ENCODE measurements at regions of chr16 and their contacts with region 1.

Region 1: GRCh38 chr16:21646721-21647561 is 5.5 kb downstream of the IGSF6 start:
- DNase-seq: peak; percentile 91
- H3K4me3 ChIP-seq: peak overlapping the region; percentile 58
- H3K27ac ChIP-seq: peak overlapping the region; percentile 95
- H3K4me1 ChIP-seq: peaks cover 87% of the 10 kb centered on the region
- CTCF ChIP-seq: no peak

Region 2: GRCh38 chr16:21584817-21585216 is 62.1 kb before region 1 on chr16:
- CTCF ChIA-PET with region 1: no interaction called
- POLR2A ChIA-PET with region 1: interaction called, 4 read pairs
- intact Hi-C with region 1: loop called (anchors 1 kb)
- DNase-seq: peak; percentile 22
- H3K4me3 ChIP-seq: no peak overlapping the region
- H3K27ac ChIP-seq: no peak overlapping the region
- H3K4me1 ChIP-seq: peaks cover 13% of the 10 kb centered on the region
- CTCF ChIP-seq: no peak

Region 3: GRCh38 chr16:21593530-21594289 is 53.2 kb before region 1 on chr16:
- CTCF ChIA-PET with region 1: interaction called, 4 read pairs
- POLR2A ChIA-PET with region 1: interaction called, 10 read pairs
- intact Hi-C with region 1: loop called (anchors 2 kb)
- DNase-seq: no peak
- H3K4me3 ChIP-seq: no peak overlapping the region
- H3K27ac ChIP-seq: no peak overlapping the region
- H3K4me1 ChIP-seq: peaks cover 65% of the 10 kb centered on the region
- CTCF ChIP-seq: no peak

Region 4: GRCh38 chr16:21599233-21600030 is 47.5 kb before region 1 on chr16 and contains the start of gene METTL9:
- CTCF ChIA-PET with region 1: no interaction called
- POLR2A ChIA-PET with region 1: interaction called, 10 read pairs
- intact Hi-C with region 1: loop called (anchors 2 kb)
- DNase-seq: peak; percentile 97
- H3K4me3 ChIP-seq: peak within 1 kb of the TSS; percentile 99
- H3K27ac ChIP-seq: peak within 1 kb of the TSS; percentile 85
- H3K4me1 ChIP-seq: peaks cover 64% of the 10 kb centered on the region
- CTCF ChIP-seq: no peak
- total RNA-seq, gene METTL9: 113 and 121 TPM in 2 replicates

Region 5: DNA sequence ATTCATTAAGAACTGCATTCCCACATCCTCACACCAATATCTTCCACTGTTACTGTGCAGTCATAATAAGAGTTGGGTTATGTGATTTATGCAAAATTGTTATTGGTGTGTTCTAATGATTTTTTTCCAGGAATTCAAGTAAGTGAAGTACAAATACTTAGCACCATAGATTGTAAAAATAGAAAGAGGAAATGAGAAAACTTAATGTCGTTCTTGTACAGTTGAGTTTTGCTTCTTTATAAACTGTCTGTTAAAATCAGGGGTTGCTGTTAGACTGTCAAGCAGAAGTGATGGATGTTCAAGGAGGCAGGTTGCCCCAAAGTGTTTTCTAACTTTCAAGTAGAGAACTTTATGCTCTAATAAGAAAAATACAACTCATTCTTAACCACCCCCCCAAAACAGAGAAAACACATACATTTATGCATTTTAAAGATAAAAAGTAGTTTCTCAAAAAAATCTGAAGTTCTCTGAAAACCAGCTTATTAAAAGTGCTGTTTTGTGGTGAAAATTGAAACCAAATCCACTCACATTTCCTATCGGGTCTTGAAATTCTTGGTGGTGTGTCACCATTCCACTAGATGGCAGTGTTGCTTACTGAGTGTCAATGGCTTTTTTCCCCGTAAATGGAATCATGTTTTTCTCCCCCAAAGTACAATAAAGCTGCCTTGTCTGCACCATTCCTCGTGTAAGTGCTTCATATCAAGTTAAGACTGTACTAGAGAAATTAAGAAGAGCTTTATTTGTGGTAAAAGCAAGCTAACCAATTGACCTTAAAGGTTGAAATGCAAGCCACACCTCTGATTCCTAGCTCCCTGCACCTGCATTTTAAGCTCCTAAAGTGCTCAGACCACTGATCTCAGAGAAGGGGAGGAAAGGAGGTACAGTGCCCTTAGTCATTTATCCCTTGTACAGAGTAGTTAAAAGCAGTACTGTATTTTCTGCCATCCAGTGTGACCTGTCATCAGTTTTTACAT is 10.1 kb after region 1 on chr16:
- CTCF ChIA-PET with region 1: interaction called, 4 read pairs
- POLR2A ChIA-PET with region 1: interaction called, 4 read pairs
- intact Hi-C with region 1: loop called (anchors 1 kb)
- DNase-seq: peak; percentile 80
- H3K4me3 ChIP-seq: peak overlapping the region; percentile 45
- H3K27ac ChIP-seq: peak overlapping the region; percentile 91
- H3K4me1 ChIP-seq: peaks cover 80% of the 10 kb centered on the region
- CTCF ChIP-seq: peak; percentile 99

Region 6: GRCh38 chr16:21667576-21667975 is 20.6 kb after region 1 on chr16:
- CTCF ChIA-PET with region 1: no interaction called
- POLR2A ChIA-PET with region 1: no interaction called
- intact Hi-C with region 1: no loop called
- DNase-seq: no peak
- H3K4me3 ChIP-seq: no peak overlapping the region
- H3K27ac ChIP-seq: no peak overlapping the region
- H3K4me1 ChIP-seq: peaks cover 6% of the 10 kb centered on the region
- CTCF ChIP-seq: no peak

Measured in OCI-LY7 (cell line).